Prostate gland (tissue), 2 donors: ENCODE measurements at regions of chr5 and their contacts with region 1.

Region 1: DNA sequence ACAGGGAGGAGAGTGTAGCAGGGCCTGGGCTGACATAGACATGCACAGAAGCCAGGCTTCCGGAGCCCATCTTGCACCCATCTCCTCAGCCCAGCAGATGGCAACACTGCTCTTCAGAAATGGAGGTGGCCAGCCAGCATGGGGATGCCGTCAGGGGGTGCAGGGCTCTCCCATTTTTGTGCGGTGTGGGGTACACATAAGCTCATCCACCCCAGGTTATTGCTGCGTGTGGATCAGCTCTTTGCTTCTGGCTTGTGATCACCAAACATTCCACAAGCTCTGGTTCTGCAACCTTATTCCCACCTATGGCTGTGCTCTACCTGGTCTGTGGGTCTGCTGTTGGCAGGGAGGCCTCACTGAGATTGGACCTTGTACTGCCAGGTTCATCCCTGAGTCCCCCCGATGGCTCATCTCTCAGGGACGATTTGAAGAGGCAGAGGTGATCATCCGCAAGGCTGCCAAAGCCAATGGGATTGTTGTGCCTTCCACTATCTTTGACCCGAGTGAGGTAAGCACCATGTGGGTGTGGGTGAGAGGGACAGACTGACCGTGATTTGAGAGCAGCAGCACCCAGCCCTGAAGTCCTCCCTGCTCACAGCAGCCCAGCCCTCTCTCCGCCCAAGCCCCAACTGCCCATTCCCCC is 17.3 kb downstream of the SLC22A5 start:
- DNase-seq: peak; percentile 68
- H3K4me3 ChIP-seq: no peak overlapping the region
- H3K27ac ChIP-seq: peak overlapping the region; percentile 89 to 92
- H3K4me1 ChIP-seq: peaks cover 31% of the 10 kb centered on the region
- H3K27me3 ChIP-seq: no peaks in the 10 kb centered on the region
- CTCF ChIP-seq: peak; percentile 67 to 93 (median 87)
- POLR2A ChIP-seq: no peak

Region 2: GRCh38 chr5:132410451-132411381 is 24.0 kb after region 1 on chr5:
- intact Hi-C with region 1: loop called (anchors 1 kb)
- DNase-seq: peak; percentile 64
- H3K4me3 ChIP-seq: peak overlapping the region; percentile 83 to 85
- H3K27ac ChIP-seq: peak overlapping the region; percentile 98 to 99
- H3K4me1 ChIP-seq: peaks cover 13% of the 10 kb centered on the region
- H3K27me3 ChIP-seq: no peaks in the 10 kb centered on the region
- CTCF ChIP-seq: peak in 3 of 4 experiments; percentile 23 to 62 (median 50)
- POLR2A ChIP-seq: no peak

Region 3: GRCh38 chr5:132612846-132613245 is 226.1 kb after region 1 on chr5:
- intact Hi-C with region 1: no loop called
- DNase-seq: no peak
- H3K4me3 ChIP-seq: no peak overlapping the region
- H3K27ac ChIP-seq: no peak overlapping the region
- H3K4me1 ChIP-seq: no peaks in the 10 kb centered on the region
- H3K27me3 ChIP-seq: no peaks in the 10 kb centered on the region
- CTCF ChIP-seq: no peak
- POLR2A ChIP-seq: no peak